ENCODE measurements at regions of chr22 and their contacts with region 1.

Region 1: DNA sequence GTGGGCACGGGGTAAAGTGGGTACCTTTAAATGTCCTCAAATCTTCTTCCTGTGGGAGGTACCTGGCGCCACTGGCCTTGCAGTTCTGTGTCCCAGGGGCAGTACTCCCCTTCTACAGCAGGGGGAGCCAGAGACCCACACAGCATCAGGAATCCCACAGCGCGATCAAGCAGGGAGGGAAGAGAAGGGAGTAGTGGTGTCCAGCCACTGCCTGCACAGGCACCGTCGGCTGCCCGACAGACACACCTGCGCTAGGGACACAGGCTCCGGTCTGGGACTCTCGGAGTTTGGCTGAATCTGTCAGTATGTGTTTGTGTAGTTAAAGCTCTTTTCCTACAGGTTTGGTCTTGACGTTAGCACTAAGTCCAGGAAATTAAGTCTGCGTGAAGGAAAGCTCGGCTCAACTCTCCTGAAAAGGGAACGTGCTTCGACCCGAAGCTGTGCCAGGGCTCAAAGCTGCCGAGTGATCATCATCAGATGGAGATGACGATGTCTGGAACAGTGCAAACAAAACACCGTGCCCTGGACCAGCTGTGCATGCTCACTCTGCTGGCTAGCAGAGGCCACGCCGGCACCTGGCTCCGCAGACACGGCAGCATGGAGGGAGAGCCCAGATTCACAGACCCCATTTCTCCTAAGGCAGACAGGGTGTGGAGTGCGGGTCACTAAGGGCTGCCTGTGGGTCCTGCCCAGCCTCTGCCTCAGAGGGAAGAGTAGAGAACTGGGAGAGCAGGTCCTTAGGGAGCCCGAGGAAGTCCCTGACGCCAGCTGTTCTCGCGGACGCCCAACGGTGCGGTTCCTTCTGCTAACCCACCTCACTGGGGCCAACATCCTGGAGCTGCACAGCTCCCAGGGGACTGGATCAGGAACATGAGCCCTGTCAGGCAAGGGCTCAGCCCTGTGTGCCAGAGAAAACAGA is 56.0 kb upstream of the BID start:
- DNase-seq: peak; percentile 81 to 96 (median 88)
- H3K4me3 ChIP-seq: no peak overlapping the region
- H3K27ac ChIP-seq: no peak overlapping the region
- H3K4me1 ChIP-seq: no peaks in the 10 kb centered on the region
- H3K27me3 ChIP-seq: no peaks in the 10 kb centered on the region
- CTCF ChIP-seq: peak; percentile 98 to 99 (median 99)
- POLR2A ChIP-seq: no peak

Region 2: GRCh38 chr22:17891481-17892167 is 61.3 kb after region 1 on chr22:
- intact Hi-C with region 1: loop called (anchors 5 to 10 kb)
- DNase-seq: no peak
- H3K4me3 ChIP-seq: no peak overlapping the region
- H3K27ac ChIP-seq: no peak overlapping the region
- H3K4me1 ChIP-seq: peaks cover 7 to 12% of the 10 kb centered on the region in 2 donors
- H3K27me3 ChIP-seq: no peaks in the 10 kb centered on the region
- CTCF ChIP-seq: peak in 1 of 6 experiments; percentile 16
- POLR2A ChIP-seq: no peak

Region 3: GRCh38 chr22:17897426-17897825 is 67.1 kb after region 1 on chr22:
- intact Hi-C with region 1: loop called (anchors 5 to 10 kb)
- DNase-seq: no peak
- H3K4me3 ChIP-seq: no peak overlapping the region
- H3K27ac ChIP-seq: no peak overlapping the region
- H3K4me1 ChIP-seq: no peaks in the 10 kb centered on the region
- H3K27me3 ChIP-seq: no peaks in the 10 kb centered on the region
- CTCF ChIP-seq: no peak
- POLR2A ChIP-seq: no peak

Region 4: DNA sequence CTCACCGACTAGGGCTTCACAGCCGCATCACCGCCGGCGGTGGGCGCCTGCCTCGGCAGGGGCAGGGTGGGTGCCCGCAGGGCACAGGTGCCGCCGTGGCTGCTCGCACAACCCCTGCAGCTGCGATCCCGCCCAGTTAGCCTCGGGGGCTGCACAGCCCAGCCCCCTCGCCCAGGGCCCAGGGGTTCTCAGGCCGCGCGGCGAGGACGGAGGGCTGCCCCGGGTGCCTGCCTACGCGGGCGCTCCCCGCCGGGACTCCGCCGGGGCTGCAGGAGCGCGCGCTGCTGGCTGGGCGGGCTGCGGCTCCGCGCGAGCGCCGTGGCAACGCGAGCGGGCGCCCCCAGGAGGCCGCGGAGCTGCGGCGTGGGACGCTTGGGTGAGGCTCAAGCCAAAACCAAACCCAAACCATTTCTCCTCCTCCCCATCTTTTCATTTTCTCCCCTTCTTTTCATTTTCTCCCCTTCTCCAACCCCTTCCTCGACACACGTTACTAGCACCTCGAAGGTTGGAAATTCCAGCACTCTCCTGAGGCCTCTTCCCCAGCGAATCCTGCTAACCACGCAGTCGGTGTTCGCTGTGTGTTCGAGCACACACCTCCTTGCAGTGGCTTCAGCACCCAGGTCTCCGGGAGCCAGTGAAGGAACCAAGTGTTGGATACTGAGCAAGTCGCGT is 194.1 kb after region 1 on chr22 and contains the start of gene MICAL3:
- intact Hi-C with region 1: loop called in 1 of 2 experiments (anchors 10 kb)
- DNase-seq: peak; percentile 44 to 75 (median 63)
- H3K4me3 ChIP-seq: peak within 1 kb of the TSS in 2 of 4 donors; percentile 69 to 75
- H3K27ac ChIP-seq: peak within 1 kb of the TSS in 4 of 5 donors; percentile 34 to 84 (median 78)
- H3K4me1 ChIP-seq: peaks cover 4 to 9% of the 10 kb centered on the region in 2 donors
- H3K27me3 ChIP-seq: no peaks in the 10 kb centered on the region
- CTCF ChIP-seq: peak; percentile 5 to 71 (median 47)
- POLR2A ChIP-seq: peak in 1 of 2 donors; percentile 46
- total RNA-seq, gene MICAL3: 24.8 to 82.6 (median 42.9) TPM

Region 5: GRCh38 chr22:18077639-18078328 is 247.5 kb after region 1 on chr22 and contains the start of gene PEX26:
- intact Hi-C with region 1: loop called (anchors 2 to 5 kb)
- DNase-seq: peak; percentile 92 to 98 (median 96)
- H3K4me3 ChIP-seq: peak within 1 kb of the TSS; percentile 25 to 95 (median 82)
- H3K27ac ChIP-seq: peak within 1 kb of the TSS; percentile 52 to 92 (median 87)
- H3K4me1 ChIP-seq: peaks cover 22 to 33% of the 10 kb centered on the region in 2 donors
- H3K27me3 ChIP-seq: no peaks in the 10 kb centered on the region
- CTCF ChIP-seq: peak in 1 of 6 experiments; percentile 2
- POLR2A ChIP-seq: peak; percentile 8 to 90
- total RNA-seq, gene PEX26: 15.7 to 57.8 (median 40.9) TPM

Measured in adrenal gland (tissue), 19 donors.